ENCODE measurements at regions of chr9 and their contacts with region 1.

Region 1: DNA sequence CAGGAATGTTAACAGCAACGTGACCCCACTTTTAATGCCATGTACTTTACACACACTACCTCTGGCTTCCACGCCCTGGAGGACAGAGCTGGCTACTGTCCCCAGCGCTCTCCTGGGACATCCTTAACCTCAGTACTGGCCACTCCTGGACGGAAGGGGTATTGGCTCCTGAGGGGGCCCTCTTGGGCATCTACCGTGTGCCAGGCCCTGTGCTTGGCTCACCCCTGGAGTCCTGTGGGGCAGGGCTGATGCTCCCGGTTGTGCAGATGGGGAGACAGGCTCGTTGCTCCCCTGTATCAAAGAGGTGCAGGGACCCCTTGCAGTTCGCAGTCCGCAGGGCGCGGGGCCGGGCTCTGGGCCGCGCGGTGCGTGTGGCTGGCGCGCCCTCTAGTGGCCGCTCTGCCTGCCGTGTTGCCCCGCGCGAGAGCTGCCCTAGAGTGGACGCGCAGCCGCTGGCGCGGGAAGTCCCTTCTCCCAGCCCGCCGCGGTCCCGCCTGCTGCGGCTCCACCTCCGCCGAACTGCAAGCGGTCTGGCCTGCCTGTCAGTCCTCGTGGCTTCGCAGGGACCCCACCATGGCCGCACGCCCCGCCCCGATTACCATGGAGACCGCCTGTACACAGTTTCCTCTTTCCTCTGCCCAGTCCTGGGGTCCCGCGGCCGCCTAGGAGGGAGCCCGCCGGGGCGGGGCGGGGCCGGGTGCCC is at the start of gene WDR38:
- DNase-seq: peak; percentile 91
- ATAC-seq: peak; percentile 81
- H3K4me3 Mint-ChIP-seq: peak within 1 kb of the TSS; percentile 46
- H3K27ac Mint-ChIP-seq: no peak within 1 kb of the TSS
- H3K4me1 Mint-ChIP-seq: peaks cover 20% of the 10 kb centered on the region
- H3K27me3 Mint-ChIP-seq: peaks cover 19% of the 10 kb centered on the region
- CTCF ChIP-seq: peak; percentile 100
- total RNA-seq, gene WDR38: not detected

Region 2: DNA sequence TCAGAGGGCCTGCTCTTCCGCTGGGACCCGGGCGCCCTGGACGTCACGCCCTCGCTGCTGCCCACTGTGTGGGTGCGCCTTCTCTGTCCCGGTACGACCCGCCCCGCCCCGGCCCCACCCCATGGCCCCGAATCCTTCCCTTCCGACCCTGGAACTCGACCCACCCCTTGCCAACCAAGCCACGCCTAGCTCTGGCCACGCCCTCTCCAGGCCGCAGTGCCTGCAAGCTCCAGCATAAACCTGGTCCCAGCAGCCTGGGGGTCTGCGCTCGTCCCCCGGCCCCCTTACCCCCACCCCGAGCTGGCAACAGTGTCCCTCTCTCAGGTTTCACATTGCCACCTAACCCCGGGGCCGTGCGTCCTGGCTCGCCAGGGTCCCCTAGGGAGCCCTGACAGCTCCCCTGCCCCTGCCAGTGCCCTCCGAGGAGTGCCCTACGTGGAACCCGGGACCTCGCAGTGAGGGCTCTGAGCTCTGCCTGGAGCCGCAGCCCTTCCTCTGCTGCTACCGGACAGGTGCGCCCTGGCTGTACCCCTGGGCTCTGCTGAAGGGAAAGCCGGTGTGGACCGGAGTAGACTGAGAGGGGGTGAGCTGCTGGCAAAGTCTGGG is 399.3 kb before region 1 on chr9:
- CTCF ChIA-PET with region 1: no interaction called
- POLR2A ChIA-PET with region 1: no interaction called
- intact Hi-C with region 1: no loop called
- DNase-seq: no peak
- ATAC-seq: peak; percentile 20
- H3K4me3 Mint-ChIP-seq: no peak overlapping the region
- H3K27ac Mint-ChIP-seq: no peak overlapping the region
- H3K4me1 Mint-ChIP-seq: no peaks in the 10 kb centered on the region
- H3K27me3 Mint-ChIP-seq: peaks cover 32% of the 10 kb centered on the region
- CTCF ChIP-seq: no peak

Region 3: DNA sequence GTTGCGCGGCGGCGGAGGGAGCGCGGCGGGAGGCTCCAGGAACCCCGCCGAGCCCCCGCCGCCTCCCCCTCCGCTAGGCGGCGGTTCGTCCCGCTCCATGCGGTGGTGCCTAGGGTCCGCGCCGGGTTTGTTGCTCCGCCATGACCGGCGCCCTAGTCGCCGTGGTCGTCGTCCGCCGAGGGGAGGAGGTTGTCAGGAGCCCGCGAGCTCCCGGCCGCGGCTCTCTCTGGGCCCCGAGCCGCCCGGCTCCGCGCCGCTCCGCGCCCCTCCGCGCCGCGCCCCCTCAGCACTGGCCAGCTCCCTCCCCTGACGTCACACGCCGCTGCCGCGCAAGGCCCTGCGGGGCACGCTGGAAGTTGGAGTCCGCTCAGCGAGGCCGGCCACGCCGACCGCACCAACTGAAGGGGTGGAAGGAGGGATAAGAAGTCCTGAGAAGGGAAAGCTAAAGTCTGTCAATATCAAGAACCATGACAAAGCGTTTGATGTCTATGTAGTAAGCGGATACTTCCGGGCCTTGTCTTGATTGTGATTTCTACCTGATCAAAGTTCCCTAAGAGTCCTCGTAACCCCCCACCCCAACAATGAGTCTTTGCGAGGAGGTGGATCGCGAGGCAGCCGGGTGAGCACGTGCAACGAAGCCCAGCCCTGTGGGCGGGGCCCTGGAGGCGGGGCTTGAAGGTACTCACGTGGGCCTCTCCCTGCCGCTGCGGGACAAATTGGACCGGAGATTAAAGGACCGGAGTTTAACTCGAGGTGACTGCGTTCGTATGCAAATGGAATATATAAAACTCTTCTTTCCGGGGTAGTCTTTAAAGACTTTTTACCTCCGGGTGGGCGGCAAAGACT is 81.7 kb before region 1 on chr9 and contains the start of gene NR6A1:
- CTCF ChIA-PET with region 1: interaction called, 431 read pairs
- POLR2A ChIA-PET with region 1: interaction called, 120 read pairs
- intact Hi-C with region 1: loop called (anchors 1 kb)
- DNase-seq: peak; percentile 97
- ATAC-seq: peak; percentile 92
- H3K4me3 Mint-ChIP-seq: peak within 1 kb of the TSS; percentile 80
- H3K27ac Mint-ChIP-seq: peak within 1 kb of the TSS; percentile 91
- H3K4me1 Mint-ChIP-seq: peaks cover 34% of the 10 kb centered on the region
- H3K27me3 Mint-ChIP-seq: peaks cover 61% of the 10 kb centered on the region
- CTCF ChIP-seq: no peak
- total RNA-seq, gene NR6A1: 0.74 to 1.1 TPM

Region 4: GRCh38 chr9:124794902-124795491 is 58.0 kb before region 1 on chr9:
- CTCF ChIA-PET with region 1: interaction called, 18 read pairs
- POLR2A ChIA-PET with region 1: no interaction called
- intact Hi-C with region 1: no loop called
- DNase-seq: no peak
- ATAC-seq: no peak
- H3K4me3 Mint-ChIP-seq: no peak overlapping the region
- H3K27ac Mint-ChIP-seq: no peak overlapping the region
- H3K4me1 Mint-ChIP-seq: no peaks in the 10 kb centered on the region
- H3K27me3 Mint-ChIP-seq: peaks cover 17% of the 10 kb centered on the region
- CTCF ChIP-seq: no peak

Region 5: GRCh38 chr9:124868511-124869465 is 15.8 kb after region 1 on chr9:
- CTCF ChIA-PET with region 1: interaction called, 24 read pairs
- POLR2A ChIA-PET with region 1: interaction called, 280 read pairs
- intact Hi-C with region 1: no loop called
- DNase-seq: peak; percentile 92
- ATAC-seq: peak; percentile 54
- H3K4me3 Mint-ChIP-seq: peak overlapping the region; percentile 94
- H3K27ac Mint-ChIP-seq: peak overlapping the region; percentile 99
- H3K4me1 Mint-ChIP-seq: peaks cover 47% of the 10 kb centered on the region
- H3K27me3 Mint-ChIP-seq: no peaks in the 10 kb centered on the region
- CTCF ChIP-seq: peak; percentile 20

Region 6: GRCh38 chr9:125089331-125089730 is 236.4 kb after region 1 on chr9:
- CTCF ChIA-PET with region 1: no interaction called
- POLR2A ChIA-PET with region 1: no interaction called
- intact Hi-C with region 1: no loop called
- DNase-seq: no peak
- ATAC-seq: no peak
- H3K4me3 Mint-ChIP-seq: no peak overlapping the region
- H3K27ac Mint-ChIP-seq: no peak overlapping the region
- H3K4me1 Mint-ChIP-seq: peaks cover 3% of the 10 kb centered on the region
- H3K27me3 Mint-ChIP-seq: no peaks in the 10 kb centered on the region
- CTCF ChIP-seq: no peak

Measured in activated CD8-positive, alpha-beta T cell treated with anti-CD3 and anti-CD28 coated beads for 36 hours (primary cell).